ENCODE measurements at regions of chr20 and their contacts with region 1.

Region 1: GRCh38 chr20:17569616-17570346 is at the start of gene DSTN:
- DNase-seq: peak; percentile 92
- ATAC-seq: peak; percentile 89
- H3K4me3 Mint-ChIP-seq: peak within 1 kb of the TSS; percentile 88
- H3K27ac Mint-ChIP-seq: peak within 1 kb of the TSS; percentile 88
- H3K4me1 Mint-ChIP-seq: peaks cover 26% of the 10 kb centered on the region
- H3K27me3 Mint-ChIP-seq: peaks cover 7% of the 10 kb centered on the region
- total RNA-seq, gene DSTN: 66.2 to 68.4 TPM

Region 2: GRCh38 chr20:17504898-17505635 is 64.7 kb before region 1 on chr20:
- CTCF ChIA-PET with region 1: interaction called, 5 read pairs
- POLR2A ChIA-PET with region 1: interaction called, 3 read pairs
- intact Hi-C with region 1: loop called in 1 of 2 experiments (anchors 2 kb)
- DNase-seq: peak; percentile 53
- ATAC-seq: peak; percentile 68
- H3K4me3 Mint-ChIP-seq: peak overlapping the region; percentile 70
- H3K27ac Mint-ChIP-seq: peak overlapping the region; percentile 80
- H3K4me1 Mint-ChIP-seq: peaks cover 27% of the 10 kb centered on the region
- H3K27me3 Mint-ChIP-seq: no peaks in the 10 kb centered on the region

Region 3: GRCh38 chr20:17536944-17537444 is 32.8 kb before region 1 on chr20:
- CTCF ChIA-PET with region 1: interaction called, 8 read pairs
- POLR2A ChIA-PET with region 1: no interaction called
- intact Hi-C with region 1: loop called (anchors 1 to 2 kb)
- DNase-seq: peak; percentile 78
- ATAC-seq: peak; percentile 92
- H3K4me3 Mint-ChIP-seq: no peak overlapping the region
- H3K27ac Mint-ChIP-seq: no peak overlapping the region
- H3K4me1 Mint-ChIP-seq: peaks cover 14% of the 10 kb centered on the region
- H3K27me3 Mint-ChIP-seq: peaks cover 11% of the 10 kb centered on the region

Region 4: DNA sequence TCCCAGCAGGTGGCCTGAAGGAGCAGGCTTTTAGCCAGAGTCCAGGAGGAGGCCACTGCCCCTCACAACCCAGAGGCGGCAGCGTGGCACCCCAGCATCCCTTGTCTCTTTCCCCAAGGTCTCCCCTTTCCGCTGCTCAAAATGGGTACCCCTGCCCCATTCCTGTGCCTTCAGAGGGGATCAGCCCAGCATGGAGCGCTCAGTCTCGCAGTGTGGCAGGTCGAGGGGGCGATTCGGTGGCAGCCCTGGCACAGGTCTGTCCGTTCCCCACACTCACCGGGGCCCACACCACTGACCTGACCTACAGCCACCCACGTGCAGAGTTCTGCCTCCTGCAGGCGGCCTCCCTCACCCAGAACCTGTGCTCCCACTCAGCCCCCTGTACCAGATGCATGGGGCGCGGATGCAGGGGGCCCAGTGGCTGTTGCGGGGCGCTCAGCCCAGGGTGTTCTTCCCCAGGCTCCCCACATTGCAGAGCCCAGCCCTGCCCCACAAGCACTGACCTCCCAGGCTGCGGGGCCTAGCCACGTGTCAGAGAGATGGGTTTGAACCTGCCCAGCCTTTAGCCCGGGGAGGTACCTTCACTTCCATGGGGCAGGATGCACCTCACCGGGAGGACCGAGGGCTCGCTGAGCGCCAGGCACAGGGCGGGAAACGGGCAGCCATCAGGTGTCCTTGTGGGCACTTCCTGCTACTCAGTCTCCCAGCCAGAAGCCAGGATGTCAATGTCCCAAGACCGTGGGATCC is 41.9 kb after region 1 on chr20:
- CTCF ChIA-PET with region 1: interaction called, 6 read pairs
- POLR2A ChIA-PET with region 1: interaction called, 3 read pairs
- intact Hi-C with region 1: loop called in 1 of 2 experiments (anchors 2 kb)
- DNase-seq: peak; percentile 57
- ATAC-seq: no peak
- H3K4me3 Mint-ChIP-seq: no peak overlapping the region
- H3K27ac Mint-ChIP-seq: peak overlapping the region; percentile 90
- H3K4me1 Mint-ChIP-seq: peaks cover 36% of the 10 kb centered on the region
- H3K27me3 Mint-ChIP-seq: no peaks in the 10 kb centered on the region

Region 5: GRCh38 chr20:17710379-17711266 is 140.8 kb after region 1 on chr20:
- CTCF ChIA-PET with region 1: no interaction called
- POLR2A ChIA-PET with region 1: no interaction called
- intact Hi-C with region 1: no loop called
- DNase-seq: no peak
- ATAC-seq: no peak
- H3K4me3 Mint-ChIP-seq: no peak overlapping the region
- H3K27ac Mint-ChIP-seq: no peak overlapping the region
- H3K4me1 Mint-ChIP-seq: no peaks in the 10 kb centered on the region
- H3K27me3 Mint-ChIP-seq: no peaks in the 10 kb centered on the region

Region 6: GRCh38 chr20:17771206-17772004 is 201.6 kb after region 1 on chr20:
- CTCF ChIA-PET with region 1: no interaction called
- POLR2A ChIA-PET with region 1: no interaction called
- intact Hi-C with region 1: no loop called
- DNase-seq: no peak
- ATAC-seq: no peak
- H3K4me3 Mint-ChIP-seq: no peak overlapping the region
- H3K27ac Mint-ChIP-seq: no peak overlapping the region
- H3K4me1 Mint-ChIP-seq: no peaks in the 10 kb centered on the region
- H3K27me3 Mint-ChIP-seq: no peaks in the 10 kb centered on the region